ENCODE measurements at regions of chr14 and their contacts with region 1.

Region 1: GRCh38 chr14:68843471-68844209 is 50.8 kb upstream of the ZFP36L1 start:
- DNase-seq: peak; percentile 68
- H3K4me3 Mint-ChIP-seq: no peak overlapping the region
- H3K27ac Mint-ChIP-seq: no peak overlapping the region
- H3K4me1 Mint-ChIP-seq: peaks cover 22% of the 10 kb centered on the region
- H3K27me3 Mint-ChIP-seq: no peaks in the 10 kb centered on the region
- CTCF ChIP-seq: peak; percentile 67

Region 2: DNA sequence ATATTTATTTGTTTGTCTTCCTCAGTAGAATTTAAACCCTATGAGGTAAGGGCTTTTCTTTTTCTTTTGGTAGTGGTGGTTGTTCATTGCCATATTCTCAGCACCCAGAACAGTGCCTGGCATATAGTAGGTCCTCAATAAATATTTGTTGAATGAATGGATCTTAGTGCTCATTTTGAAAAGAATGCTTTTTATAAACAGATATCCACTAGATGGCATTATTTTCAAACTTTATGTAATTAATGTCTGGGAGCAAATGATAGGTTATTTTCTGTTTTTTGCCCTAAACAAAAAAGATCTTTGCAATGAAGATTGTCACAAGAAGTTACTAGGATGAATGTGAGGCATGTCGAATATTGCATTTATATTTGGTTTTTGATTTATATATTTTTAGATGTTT is 959.9 kb before region 1 on chr14:
- CTCF ChIA-PET with region 1: interaction called, 16 read pairs
- POLR2A ChIA-PET with region 1: no interaction called
- intact Hi-C with region 1: loop called (anchors 1 kb)
- DNase-seq: peak; percentile 8
- H3K4me3 Mint-ChIP-seq: no peak overlapping the region
- H3K27ac Mint-ChIP-seq: no peak overlapping the region
- H3K4me1 Mint-ChIP-seq: peaks cover 6% of the 10 kb centered on the region
- H3K27me3 Mint-ChIP-seq: no peaks in the 10 kb centered on the region
- CTCF ChIP-seq: peak; percentile 38

Region 3: DNA sequence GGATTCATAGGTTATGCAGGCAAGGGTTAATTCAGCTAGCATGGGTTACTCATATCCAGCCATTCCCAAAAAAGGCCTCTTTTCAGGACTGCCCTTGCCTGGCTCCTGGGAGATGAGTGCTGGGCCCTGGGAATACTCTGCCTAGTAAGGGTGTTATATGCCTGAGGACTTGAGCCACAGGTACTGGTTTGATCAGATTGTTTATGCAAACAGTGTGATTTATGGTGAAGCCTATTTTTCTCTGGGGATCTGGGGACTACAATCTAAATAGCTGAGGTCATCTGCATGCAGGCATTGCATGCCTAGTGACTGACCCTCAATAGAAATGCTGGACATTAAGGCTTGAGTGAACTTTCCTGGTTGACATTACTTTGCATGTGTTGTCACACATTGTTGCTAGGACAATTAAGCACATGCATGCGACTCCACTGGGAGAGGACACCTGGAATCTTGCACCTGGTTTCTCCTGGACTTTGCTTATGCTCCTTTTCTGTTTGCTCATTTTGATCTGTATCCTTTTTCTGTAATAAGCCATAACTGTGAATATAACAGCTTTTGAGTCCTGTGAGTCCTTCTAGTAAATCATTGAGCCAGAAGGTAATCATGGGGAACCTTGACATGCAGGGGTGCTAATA is 951.1 kb before region 1 on chr14:
- CTCF ChIA-PET with region 1: interaction called, 12 read pairs
- POLR2A ChIA-PET with region 1: no interaction called
- intact Hi-C with region 1: no loop called
- DNase-seq: no peak
- H3K4me3 Mint-ChIP-seq: no peak overlapping the region
- H3K27ac Mint-ChIP-seq: no peak overlapping the region
- H3K4me1 Mint-ChIP-seq: no peaks in the 10 kb centered on the region
- H3K27me3 Mint-ChIP-seq: no peaks in the 10 kb centered on the region
- CTCF ChIP-seq: no peak

Region 4: GRCh38 chr14:67934008-67934481 is 909.6 kb before region 1 on chr14:
- CTCF ChIA-PET with region 1: interaction called, 26 read pairs
- POLR2A ChIA-PET with region 1: interaction called, 3 read pairs
- intact Hi-C with region 1: loop called (anchors 5 kb)
- DNase-seq: peak; percentile 74
- H3K4me3 Mint-ChIP-seq: no peak overlapping the region
- H3K27ac Mint-ChIP-seq: peak overlapping the region; percentile 26
- H3K4me1 Mint-ChIP-seq: peaks cover 29% of the 10 kb centered on the region
- H3K27me3 Mint-ChIP-seq: no peaks in the 10 kb centered on the region
- CTCF ChIP-seq: peak; percentile 52

Region 5: GRCh38 chr14:68816262-68816942 is 27.2 kb before region 1 on chr14:
- CTCF ChIA-PET with region 1: interaction called, 15 read pairs
- POLR2A ChIA-PET with region 1: interaction called, 3 read pairs
- intact Hi-C with region 1: no loop called
- DNase-seq: peak; percentile 85
- H3K4me3 Mint-ChIP-seq: peak overlapping the region; percentile 49
- H3K27ac Mint-ChIP-seq: peak overlapping the region; percentile 88
- H3K4me1 Mint-ChIP-seq: peaks cover 20% of the 10 kb centered on the region
- H3K27me3 Mint-ChIP-seq: no peaks in the 10 kb centered on the region
- CTCF ChIP-seq: peak; percentile 98

Region 6: DNA sequence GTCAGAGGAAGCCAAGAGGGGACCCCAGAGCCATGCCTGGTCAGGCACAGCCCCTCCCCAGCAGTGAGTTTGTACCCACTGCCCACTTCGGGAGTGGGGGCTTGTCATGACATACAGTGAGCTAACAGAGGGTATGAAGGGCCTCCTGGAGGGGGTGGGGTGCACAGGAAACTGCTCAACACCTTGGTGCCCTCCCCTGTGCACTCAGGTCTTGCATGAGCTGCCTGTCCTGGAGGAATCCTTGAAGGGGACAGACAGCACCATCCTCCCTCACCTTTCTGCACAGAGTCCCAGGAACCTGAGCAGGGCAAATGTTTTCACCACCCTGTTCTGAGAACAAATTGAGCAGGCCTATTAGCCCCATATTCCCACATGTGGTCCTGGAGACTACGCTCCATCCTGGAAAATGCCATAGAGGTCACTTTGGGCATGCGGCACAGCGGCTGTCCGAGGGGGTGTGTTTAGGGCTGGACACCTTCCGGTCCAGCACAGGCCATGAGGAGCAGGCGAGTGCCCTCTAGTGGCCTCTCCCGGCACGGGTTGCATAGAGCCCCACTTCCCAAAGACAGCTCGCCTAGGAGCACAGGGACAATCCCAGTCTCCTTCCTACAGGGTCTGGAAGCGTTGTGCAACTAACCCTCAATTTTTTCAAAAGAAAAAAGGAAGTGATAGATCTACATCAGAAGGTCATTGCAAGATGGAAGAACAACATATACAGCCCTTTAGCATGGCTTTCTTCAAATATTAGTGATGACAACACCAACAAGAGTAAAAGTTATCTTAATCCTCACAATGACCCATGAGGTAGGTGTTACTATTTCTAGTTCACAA is 18.9 kb before region 1 on chr14:
- CTCF ChIA-PET with region 1: interaction called, 23 read pairs
- POLR2A ChIA-PET with region 1: no interaction called
- intact Hi-C with region 1: no loop called
- DNase-seq: peak; percentile 86
- H3K4me3 Mint-ChIP-seq: no peak overlapping the region
- H3K27ac Mint-ChIP-seq: no peak overlapping the region
- H3K4me1 Mint-ChIP-seq: peaks cover 8% of the 10 kb centered on the region
- H3K27me3 Mint-ChIP-seq: no peaks in the 10 kb centered on the region
- CTCF ChIP-seq: peak; percentile 80